Vagina (tissue), 2 donors: ENCODE measurements at regions of chr18 and their contacts with region 1.

Region 1: DNA sequence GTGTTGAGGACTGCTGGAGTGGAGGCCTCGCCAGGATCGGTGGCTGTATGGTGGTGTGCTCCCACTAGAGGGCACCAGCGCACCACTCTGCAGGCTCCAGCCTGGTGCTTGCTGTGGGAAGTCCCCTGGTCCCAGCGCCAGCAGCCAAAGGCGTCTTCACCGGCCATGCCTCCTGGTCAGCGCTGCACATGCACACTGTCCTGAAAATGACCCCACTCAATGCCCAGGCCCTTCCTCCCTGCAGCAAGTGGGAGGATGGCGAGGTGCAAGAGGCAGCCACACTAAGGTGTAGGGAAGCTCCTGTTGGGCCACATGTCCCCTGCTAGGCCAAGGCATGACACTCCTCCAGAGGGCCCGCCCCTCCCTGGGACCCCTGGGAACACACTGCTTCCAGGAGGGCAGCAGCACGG is 136.5 kb downstream of the CTIF start:
- DNase-seq: no peak
- H3K4me3 ChIP-seq: no peak overlapping the region
- H3K27ac ChIP-seq: no peak overlapping the region
- H3K4me1 ChIP-seq: peaks cover 21% of the 10 kb centered on the region
- H3K27me3 ChIP-seq: no peaks in the 10 kb centered on the region
- CTCF ChIP-seq: peak; percentile 88 to 95 (median 91)
- POLR2A ChIP-seq: no peak

Region 2: GRCh38 chr18:48834413-48835031 is 159.2 kb after region 1 on chr18:
- intact Hi-C with region 1: no loop called
- DNase-seq: no peak
- H3K4me3 ChIP-seq: peak overlapping the region in 1 of 2 donors; percentile 14
- H3K27ac ChIP-seq: peak overlapping the region; percentile 40
- H3K4me1 ChIP-seq: peaks cover 61% of the 10 kb centered on the region
- H3K27me3 ChIP-seq: no peaks in the 10 kb centered on the region
- CTCF ChIP-seq: no peak
- POLR2A ChIP-seq: no peak

Region 3: DNA sequence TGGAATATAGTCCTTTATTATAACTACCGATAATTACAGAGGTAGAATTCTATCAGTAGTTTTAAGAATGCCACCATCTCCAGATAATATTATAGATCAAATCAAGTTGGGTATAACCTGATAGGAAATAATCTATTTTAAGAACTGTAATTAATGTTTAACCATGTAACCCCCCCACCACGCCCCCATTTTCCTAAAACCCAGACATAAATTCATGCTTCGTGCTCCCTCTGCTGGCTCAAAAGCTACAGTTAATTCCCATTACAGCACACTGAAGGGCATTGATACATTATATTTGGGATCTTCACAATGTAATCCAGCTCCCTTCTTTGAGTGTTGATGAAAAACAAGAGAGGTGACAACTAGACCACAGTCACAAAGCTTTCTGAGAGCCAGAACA is 503.4 kb after region 1 on chr18:
- intact Hi-C with region 1: loop called (anchors 10 kb)
- DNase-seq: no peak
- H3K4me3 ChIP-seq: no peak overlapping the region
- H3K27ac ChIP-seq: no peak overlapping the region
- H3K4me1 ChIP-seq: no peaks in the 10 kb centered on the region
- H3K27me3 ChIP-seq: no peaks in the 10 kb centered on the region
- CTCF ChIP-seq: peak in 2 of 3 experiments; percentile 27
- POLR2A ChIP-seq: no peak

Region 4: DNA sequence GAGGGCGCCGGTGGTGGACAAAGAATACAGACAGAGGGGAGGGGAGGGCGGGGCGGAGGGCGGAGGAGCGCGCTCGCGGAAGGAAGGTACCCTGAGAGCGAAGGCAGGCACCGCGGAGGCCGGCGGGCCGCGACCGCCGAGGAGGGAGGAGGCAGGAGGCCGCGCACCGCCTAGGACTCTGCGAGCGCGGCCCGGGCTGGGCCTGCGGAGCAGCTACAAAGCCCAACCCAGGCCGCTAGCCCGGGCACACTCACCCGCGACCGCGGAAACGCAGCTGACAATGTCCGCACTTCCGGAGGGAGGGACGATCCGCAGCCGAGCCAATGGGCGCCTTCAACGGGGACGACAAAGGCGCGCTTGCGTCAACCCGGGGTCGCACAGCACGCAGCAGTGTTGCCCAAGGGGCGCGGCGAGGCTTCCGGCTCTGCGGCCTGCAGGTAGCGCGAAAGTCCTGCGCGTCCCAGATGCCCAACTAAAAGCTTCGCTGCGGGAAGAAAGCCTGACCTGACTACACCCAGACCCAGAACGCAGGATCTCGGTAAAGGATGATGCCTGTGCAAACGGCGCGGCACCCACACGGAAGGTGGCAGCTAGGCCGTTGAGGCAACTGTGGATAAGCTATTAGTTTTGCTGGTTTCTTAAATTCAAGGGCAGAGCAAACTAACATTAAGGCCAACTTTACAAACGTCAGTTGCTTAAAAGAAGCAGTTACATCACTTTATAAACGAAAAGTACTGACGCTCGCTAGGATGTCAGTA is 811.8 kb after region 1 on chr18 and contains the start of gene C18orf32:
- intact Hi-C with region 1: loop called (anchors 10 kb)
- DNase-seq: peak in 1 of 2 donors; percentile 93
- H3K4me3 ChIP-seq: peak within 1 kb of the TSS; percentile 60 to 76
- H3K27ac ChIP-seq: peak within 1 kb of the TSS; percentile 92
- H3K4me1 ChIP-seq: peaks cover 60% of the 10 kb centered on the region
- H3K27me3 ChIP-seq: no peaks in the 10 kb centered on the region
- CTCF ChIP-seq: no peak
- POLR2A ChIP-seq: peak; percentile 67 to 96
- total RNA-seq, gene C18orf32: 21.1 TPM